H1 (cell line): ENCODE measurements at regions of chr5 and their contacts with region 1.

Region 1: DNA sequence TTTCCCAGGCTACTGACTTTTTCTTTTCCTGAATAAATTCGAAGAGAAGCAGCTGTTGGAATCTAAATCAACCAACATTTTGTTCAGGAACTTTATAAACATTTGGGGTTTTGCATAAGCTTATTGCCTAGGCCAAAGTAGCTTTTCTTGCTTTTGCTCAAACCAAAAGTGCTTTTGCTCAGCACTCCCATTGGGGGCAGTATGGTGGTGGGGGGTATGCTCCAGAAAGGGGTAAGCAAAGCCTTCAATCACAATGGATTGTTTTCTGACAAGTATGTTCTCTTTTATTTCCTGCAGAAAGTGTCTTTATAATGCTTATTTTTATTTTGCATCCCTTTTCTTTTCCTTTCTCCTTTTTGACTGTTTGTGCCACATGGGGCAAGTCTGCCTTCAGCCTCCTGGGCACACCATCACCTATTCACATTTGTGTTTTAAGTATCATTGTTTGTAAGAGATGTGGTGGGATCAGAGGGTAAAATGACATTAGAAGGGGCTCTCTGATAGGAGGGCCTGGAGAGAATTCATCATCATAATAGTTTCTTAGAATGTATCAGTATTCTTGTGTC is 86.0 kb downstream of the PRDM6 start:
- DNase-seq: peak in 1 of 2 experiments; percentile 21
- H3K4me3 ChIP-seq: peak overlapping the region in 1 of 4 experiments; percentile 27; a peak in 1 of 8 replicates
- H3K27ac ChIP-seq: no peak overlapping the region
- H3K4me1 ChIP-seq: peaks cover 2 to 16% (median 8%) of the 10 kb centered on the region in 4 experiments; a peak in 5 of 7 replicates
- H3K27me3 ChIP-seq: peaks cover 0 to 1% (median 0%) of the 10 kb centered on the region in 4 experiments; a peak in 3 of 7 replicates
- CTCF ChIP-seq: peak; percentile 41 to 67 (median 50); a peak in 3 of 4 replicates
- EP300 ChIP-seq: no peak
- POLR2A ChIP-seq: no peak
- RAD21 ChIP-seq: peak; percentile 39 to 45

Region 2: GRCh38 chr5:123157791-123158581 is 17.0 kb before region 1 on chr5:
- CTCF ChIA-PET with region 1: interaction called, 22 read pairs
- POLR2A ChIA-PET with region 1: interaction called, 3 read pairs
- DNase-seq: no peak
- H3K4me3 ChIP-seq: no peak overlapping the region
- H3K27ac ChIP-seq: no peak overlapping the region
- H3K4me1 ChIP-seq: no peaks in the 10 kb centered on the region
- H3K27me3 ChIP-seq: no peaks in the 10 kb centered on the region
- CTCF ChIP-seq: no peak
- EP300 ChIP-seq: no peak
- POLR2A ChIP-seq: no peak
- RAD21 ChIP-seq: peak; percentile 19 to 43; a peak in 3 of 4 replicates

Region 3: DNA sequence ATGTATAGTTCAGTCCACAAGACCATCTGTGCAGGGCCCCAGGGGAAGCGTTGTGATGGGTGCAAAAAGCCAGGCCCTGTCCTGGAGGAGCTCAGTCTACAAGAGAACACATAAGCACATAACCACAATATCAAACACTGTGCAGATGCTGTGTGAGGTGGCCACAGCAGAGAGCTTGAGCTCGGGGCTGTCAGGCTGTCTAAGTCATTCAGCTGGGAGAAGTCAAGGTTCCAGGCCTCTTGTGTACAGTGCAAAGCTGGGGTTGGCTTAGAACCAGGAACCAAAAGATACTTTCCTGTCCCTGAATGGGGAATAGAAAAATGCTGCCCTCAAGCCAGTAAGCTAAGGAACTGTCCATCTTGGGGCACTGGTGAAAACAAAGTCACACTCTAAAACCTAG is 10.9 kb before region 1 on chr5:
- CTCF ChIA-PET with region 1: interaction called, 22 read pairs
- POLR2A ChIA-PET with region 1: interaction called, 3 read pairs
- DNase-seq: no peak
- H3K4me3 ChIP-seq: no peak overlapping the region
- H3K27ac ChIP-seq: no peak overlapping the region
- H3K4me1 ChIP-seq: peaks cover 0 to 6% (median 1%) of the 10 kb centered on the region in 4 experiments; a peak in 2 of 7 replicates
- H3K27me3 ChIP-seq: no peaks in the 10 kb centered on the region
- CTCF ChIP-seq: no peak
- EP300 ChIP-seq: no peak
- POLR2A ChIP-seq: no peak
- RAD21 ChIP-seq: no peak